Natural killer cell (primary cell): ENCODE measurements at regions of chr12 and their contacts with region 1.

Region 1: DNA sequence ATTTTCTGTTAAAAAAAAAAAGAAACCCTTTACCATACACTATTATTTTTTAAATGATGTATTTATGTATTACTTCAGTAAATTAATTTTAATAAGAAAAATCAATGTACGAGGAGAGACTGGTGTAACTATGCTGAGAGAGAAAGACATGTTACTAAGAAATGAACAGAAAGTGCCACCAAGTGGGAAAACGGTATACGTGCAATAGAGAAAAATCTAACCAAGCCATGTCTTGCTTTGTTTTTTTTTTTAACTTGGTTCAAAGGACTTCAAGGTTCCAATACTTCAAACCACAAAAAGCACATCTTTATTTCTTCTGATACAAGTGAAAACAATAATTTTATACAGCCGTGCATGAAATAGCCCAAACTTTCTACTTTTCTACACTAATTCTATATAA is 22.9 kb downstream of the NDUFA12 start:
- DNase-seq: peak in 1 of 2 donors; percentile 61
- ATAC-seq: peak in 2 of 3 donors; percentile 49 to 52
- H3K4me3 ChIP-seq: no peak overlapping the region
- H3K4me3 Mint-ChIP-seq: no peak overlapping the region
- H3K27ac ChIP-seq: no peak overlapping the region
- H3K27ac Mint-ChIP-seq: peak overlapping the region; percentile 11 to 22
- H3K4me1 ChIP-seq: peaks cover 24% of the 10 kb centered on the region
- H3K4me1 Mint-ChIP-seq: peaks cover 43 to 51% of the 10 kb centered on the region in 2 donors
- H3K27me3 ChIP-seq: no peaks in the 10 kb centered on the region
- H3K27me3 Mint-ChIP-seq: no peaks in the 10 kb centered on the region
- CTCF ChIP-seq: peak; percentile 24

Region 2: GRCh38 chr12:94817695-94818075 is 162.9 kb before region 1 on chr12:
- intact Hi-C with region 1: loop called (anchors 1 kb)
- DNase-seq: no peak
- ATAC-seq: no peak
- H3K4me3 ChIP-seq: peak overlapping the region; percentile 20
- H3K4me3 Mint-ChIP-seq: no peak overlapping the region
- H3K27ac ChIP-seq: peak overlapping the region; percentile 44
- H3K27ac Mint-ChIP-seq: no peak overlapping the region
- H3K4me1 ChIP-seq: no peaks in the 10 kb centered on the region
- H3K4me1 Mint-ChIP-seq: no peaks in the 10 kb centered on the region
- H3K27me3 ChIP-seq: no peaks in the 10 kb centered on the region
- H3K27me3 Mint-ChIP-seq: peaks cover 0 to 2% of the 10 kb centered on the region in 2 donors
- CTCF ChIP-seq: no peak

Region 3: DNA sequence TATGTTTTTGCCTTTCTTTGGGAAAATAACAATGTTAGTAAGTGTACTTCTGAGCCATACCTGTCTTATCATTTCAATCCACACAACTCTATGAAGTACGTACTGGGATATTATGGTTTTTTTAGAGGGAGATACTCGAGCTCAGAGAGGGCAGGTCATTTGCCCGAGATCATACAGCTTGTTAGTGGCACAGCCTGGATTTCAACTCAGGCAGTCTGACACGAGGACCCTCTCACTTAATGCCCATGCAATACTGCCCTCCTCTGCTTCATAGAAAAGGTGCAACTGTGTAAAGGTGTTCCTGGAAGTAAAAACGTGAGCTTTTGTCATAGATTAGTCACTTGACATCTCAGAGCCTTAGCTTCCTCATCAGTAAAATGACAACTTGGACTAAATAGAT is 105.1 kb before region 1 on chr12:
- intact Hi-C with region 1: loop called (anchors 10 kb)
- DNase-seq: peak in 1 of 2 donors; percentile 35
- ATAC-seq: peak in 2 of 3 donors; percentile 52 to 54
- H3K4me3 ChIP-seq: no peak overlapping the region
- H3K4me3 Mint-ChIP-seq: peak overlapping the region; percentile 45
- H3K27ac ChIP-seq: no peak overlapping the region
- H3K27ac Mint-ChIP-seq: no peak overlapping the region
- H3K4me1 ChIP-seq: peaks cover 14% of the 10 kb centered on the region
- H3K4me1 Mint-ChIP-seq: peaks cover 10 to 22% of the 10 kb centered on the region in 2 donors
- H3K27me3 ChIP-seq: peaks cover 35% of the 10 kb centered on the region
- H3K27me3 Mint-ChIP-seq: peaks cover 57 to 72% of the 10 kb centered on the region in 2 donors
- CTCF ChIP-seq: no peak